Mammary epithelial cell (primary cell): ENCODE measurements at regions of chr18 and their contacts with region 1.

Region 1: DNA sequence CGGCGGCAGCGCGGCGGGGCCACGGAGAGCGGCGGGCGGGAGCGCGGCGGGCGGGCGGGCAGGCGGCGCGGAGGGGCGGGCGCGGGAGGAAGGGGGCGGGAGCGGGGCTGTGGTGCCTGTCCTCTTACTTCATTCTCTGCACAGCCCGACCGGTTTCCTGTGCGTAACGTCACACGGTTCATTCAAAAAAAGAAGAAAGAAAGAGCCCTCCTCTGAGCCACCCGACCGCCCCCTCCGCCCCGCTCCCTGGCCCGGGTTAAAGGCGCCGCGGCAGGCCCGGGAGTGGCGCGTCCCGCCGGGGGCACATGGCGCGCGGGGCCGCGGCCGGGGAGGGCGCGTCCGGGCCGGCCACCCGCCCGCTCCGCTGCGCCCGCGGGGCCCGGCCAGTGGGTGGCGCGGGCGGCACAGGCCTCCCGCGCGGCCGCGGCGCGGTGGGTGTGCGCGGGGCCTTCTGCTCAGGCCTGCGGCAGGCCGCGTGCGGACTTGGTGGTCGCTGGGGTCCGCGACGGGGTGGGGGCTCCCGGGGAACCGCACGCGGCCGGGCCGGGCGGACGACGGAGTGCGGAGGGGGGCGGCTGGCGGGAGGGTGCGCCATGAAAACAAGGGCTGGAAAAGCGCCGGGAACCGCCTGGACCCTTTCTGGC is 599 bp upstream of the BCL2 start:
- DNase-seq: peak; percentile 72
- H3K4me3 ChIP-seq: peak overlapping the region; percentile 27 to 64 (median 43)
- H3K27ac ChIP-seq: no peak overlapping the region
- H3K4me1 ChIP-seq: peaks cover 14% of the 10 kb centered on the region
- H3K27me3 ChIP-seq: peaks cover 4% of the 10 kb centered on the region
- CTCF ChIP-seq: no peak

Region 2: DNA sequence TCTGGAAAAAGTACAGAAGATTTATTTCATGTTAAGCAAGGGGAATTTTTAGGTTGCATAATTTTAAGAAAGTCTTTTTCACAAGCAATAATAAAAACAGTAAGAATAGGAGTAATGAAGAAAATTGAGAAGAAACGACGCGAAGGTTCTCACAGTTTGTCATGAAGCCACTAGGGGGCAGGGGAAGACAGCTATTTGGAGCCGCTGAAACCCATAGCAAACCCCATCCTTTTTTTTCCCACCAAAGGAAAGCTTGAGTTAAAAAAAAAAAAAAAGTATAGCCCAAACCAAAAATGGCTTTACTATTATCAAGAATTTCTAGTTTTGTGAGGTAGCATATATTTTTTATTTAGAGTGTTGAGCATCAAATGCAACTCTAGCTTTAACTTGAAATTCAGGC is 303.9 kb before region 1 on chr18:
- CTCF ChIA-PET with region 1: no interaction called
- dilution Hi-C with region 1: no loop called
- in situ Hi-C with region 1: loop called (anchors 5 to 10 kb)
- intact Hi-C with region 1: loop called (anchors 1 kb)
- DNase-seq: peak; percentile 19
- H3K4me3 ChIP-seq: no peak overlapping the region
- H3K27ac ChIP-seq: no peak overlapping the region
- H3K4me1 ChIP-seq: no peaks in the 10 kb centered on the region
- H3K27me3 ChIP-seq: peaks cover 2% of the 10 kb centered on the region
- CTCF ChIP-seq: peak; percentile 78 to 80

Region 3: GRCh38 chr18:63119647-63120046 is 200.5 kb before region 1 on chr18:
- CTCF ChIA-PET with region 1: interaction called, 10 read pairs
- dilution Hi-C with region 1: no loop called
- in situ Hi-C with region 1: no loop called
- intact Hi-C with region 1: loop called (anchors 1 kb)
- DNase-seq: no peak
- H3K4me3 ChIP-seq: no peak overlapping the region
- H3K27ac ChIP-seq: no peak overlapping the region
- H3K4me1 ChIP-seq: no peaks in the 10 kb centered on the region
- H3K27me3 ChIP-seq: no peaks in the 10 kb centered on the region
- CTCF ChIP-seq: peak; percentile 22 to 51

Region 4: DNA sequence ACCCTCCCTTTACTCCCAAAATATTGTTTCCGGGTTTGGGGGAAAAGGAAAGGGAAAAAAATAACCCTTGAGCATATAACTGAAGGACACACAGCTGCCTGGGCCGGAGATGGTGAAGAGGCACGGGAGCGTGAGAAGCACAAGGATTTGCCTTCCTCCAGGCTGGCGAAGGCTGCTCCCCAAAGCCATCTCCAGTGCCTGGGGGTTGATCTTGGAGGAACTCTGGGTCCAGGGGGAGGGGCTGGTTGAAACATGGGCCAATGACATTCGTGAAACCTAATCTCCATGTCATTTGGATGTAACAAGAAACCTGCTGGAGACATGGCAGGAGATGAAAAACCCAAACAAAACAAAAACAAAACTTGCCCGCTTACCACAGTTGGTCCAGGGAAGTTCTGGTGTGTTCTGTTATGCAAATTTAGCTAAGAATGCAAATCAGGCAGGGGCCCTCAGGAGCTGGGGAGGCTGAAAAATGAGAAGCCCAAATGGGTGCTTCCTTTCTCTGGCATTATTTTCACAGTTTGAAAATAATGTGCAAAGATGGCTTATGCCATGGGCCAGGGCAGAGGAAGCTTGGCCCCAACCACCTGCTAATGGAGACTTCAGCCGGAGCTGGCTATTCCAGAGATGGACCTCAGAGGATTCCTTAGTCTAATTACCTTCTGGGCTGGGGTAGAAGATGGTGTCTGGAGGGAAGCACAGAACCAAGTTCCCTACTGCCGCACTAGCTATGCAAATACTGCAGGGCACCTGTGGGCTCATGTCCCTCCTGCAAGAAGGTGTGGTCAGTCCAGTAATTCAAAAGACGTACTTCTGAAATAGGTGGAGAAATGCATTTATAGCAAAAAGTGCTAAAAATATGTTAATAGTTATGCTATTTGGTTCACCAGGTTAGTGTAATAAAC is 181.5 kb before region 1 on chr18:
- CTCF ChIA-PET with region 1: no interaction called
- dilution Hi-C with region 1: no loop called
- in situ Hi-C with region 1: loop called (anchors 5 to 10 kb)
- intact Hi-C with region 1: no loop called
- DNase-seq: no peak
- H3K4me3 ChIP-seq: no peak overlapping the region
- H3K27ac ChIP-seq: no peak overlapping the region
- H3K4me1 ChIP-seq: no peaks in the 10 kb centered on the region
- H3K27me3 ChIP-seq: no peaks in the 10 kb centered on the region
- CTCF ChIP-seq: no peak

Region 5: GRCh38 chr18:63439334-63439733 is 119.2 kb after region 1 on chr18:
- CTCF ChIA-PET with region 1: no interaction called
- dilution Hi-C with region 1: no loop called
- in situ Hi-C with region 1: no loop called
- intact Hi-C with region 1: loop called (anchors 1 kb)
- DNase-seq: peak; percentile 64
- H3K4me3 ChIP-seq: no peak overlapping the region
- H3K27ac ChIP-seq: peak overlapping the region; percentile 63
- H3K4me1 ChIP-seq: peaks cover 44% of the 10 kb centered on the region
- H3K27me3 ChIP-seq: no peaks in the 10 kb centered on the region
- CTCF ChIP-seq: peak; percentile 86 to 92